Left colon (tissue), 2 donors: ENCODE measurements at regions of chr1 and their contacts with region 1.

Region 1: DNA sequence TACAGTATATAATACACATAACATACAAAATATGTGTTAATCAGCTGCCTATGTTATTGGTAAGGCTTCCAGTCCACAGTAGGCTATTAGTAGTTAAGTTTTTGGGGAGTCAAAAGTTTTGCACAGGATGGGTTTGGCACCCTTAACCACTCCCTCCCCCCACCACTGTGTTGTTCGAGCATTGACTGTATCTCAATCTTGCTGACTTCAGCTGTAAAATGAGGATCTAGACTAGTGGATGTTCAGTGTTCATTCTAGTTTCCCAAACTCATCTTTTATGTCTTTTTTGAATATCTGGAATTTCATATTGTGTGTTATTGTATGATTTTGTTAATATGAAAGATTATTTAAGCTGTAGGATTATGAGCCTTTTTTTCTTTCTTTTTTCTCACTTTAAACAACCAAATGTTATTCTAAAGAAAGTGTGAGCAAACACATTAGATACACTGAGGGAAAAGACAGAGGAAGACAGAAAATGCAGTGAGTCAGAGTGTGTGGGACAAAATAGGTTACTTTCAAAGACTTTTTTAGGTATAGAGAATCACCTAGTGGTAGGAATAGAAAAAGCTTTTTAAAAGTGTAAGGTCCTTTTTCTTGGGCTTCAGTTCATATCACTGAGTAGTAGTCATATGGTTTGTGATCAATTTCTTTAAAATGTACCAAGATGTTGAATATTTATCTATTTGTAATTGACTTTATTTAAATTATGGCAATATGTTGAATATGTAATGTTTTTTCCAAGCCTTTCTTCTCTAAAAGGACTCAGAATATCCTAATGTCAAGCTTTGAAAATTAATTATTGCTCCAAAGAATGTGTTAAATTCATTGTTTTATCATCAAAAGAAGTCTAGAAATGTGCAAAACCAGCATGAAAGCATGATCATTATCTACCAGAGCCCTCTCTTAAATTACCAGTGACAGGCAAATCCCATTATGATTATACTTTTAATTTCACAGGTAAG is 17.9 kb upstream of the CENPF start:
- DNase-seq: no peak
- ATAC-seq: peak; percentile 72

Region 2: GRCh38 chr1:214261206-214262123 is 323.6 kb before region 1 on chr1:
- intact Hi-C with region 1: loop called in 1 of 2 experiments (anchors 10 kb)
- DNase-seq: peak; percentile 63 to 87
- ATAC-seq: peak; percentile 95

Region 3: DNA sequence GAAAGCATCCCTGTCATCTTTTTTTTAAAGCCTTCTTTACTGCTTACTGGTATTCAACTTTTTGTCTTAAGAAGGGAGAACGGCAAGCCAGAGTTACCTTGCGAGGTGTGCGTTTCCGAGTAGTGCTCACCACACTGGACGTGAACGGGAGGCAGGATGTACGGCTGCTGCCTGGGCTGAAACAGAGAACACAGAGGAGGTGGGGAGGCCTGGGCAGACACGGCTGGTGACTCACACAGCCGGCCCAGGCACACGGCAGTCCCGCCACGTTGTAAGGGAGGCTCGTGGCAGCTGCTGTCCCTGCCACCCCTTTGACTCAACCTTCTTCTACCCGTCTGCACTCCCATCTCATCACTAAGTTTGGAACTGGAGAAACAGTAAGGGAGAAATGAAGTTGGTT is 198.3 kb before region 1 on chr1:
- intact Hi-C with region 1: loop called in 1 of 2 experiments (anchors 5 kb)
- DNase-seq: no peak
- ATAC-seq: no peak